ENCODE measurements at regions of chr7 and their contacts with region 1.

Region 1: DNA sequence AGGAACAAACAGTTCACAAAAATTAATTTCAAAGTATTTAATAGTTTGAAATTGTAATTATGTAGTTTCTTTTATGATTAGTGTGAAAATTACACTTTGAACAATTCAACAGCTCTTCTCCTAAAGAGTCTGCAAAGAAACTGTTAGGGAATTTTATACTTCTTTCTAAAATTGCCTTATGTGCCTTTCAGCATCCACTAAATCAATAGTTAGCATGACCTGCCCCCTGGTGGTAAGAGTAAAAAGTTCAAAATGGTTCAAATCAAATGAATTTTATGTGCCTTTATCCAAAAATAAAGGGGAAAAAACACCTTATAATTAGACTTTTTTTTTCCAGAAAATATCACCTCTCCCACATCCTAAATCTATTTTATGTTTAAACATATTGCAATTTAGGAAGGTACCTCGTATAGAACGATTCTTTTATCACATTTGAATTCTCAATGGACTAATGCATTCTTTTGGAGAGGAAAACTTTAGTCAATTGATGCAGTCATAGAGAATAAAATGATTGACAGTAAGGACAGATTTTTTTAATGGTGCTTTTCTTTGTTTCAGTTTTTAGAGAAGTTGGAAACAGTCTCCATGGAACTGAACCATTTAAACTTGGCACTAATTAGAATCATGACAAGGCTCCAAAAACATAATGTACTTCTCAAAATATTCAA is 163.7 kb downstream of the SEMA3D start:
- DNase-seq: no peak
- ATAC-seq: no peak
- H3K4me3 ChIP-seq: no peak overlapping the region
- H3K27ac ChIP-seq: no peak overlapping the region; the same call in 1 of the 2 replicates
- H3K4me1 ChIP-seq: no peaks in the 10 kb centered on the region; the same call in 1 of the 2 replicates
- H3K27me3 ChIP-seq: no peaks in the 10 kb centered on the region
- CTCF ChIP-seq: peak; percentile 61; the same call in 1 of the 2 replicates

Region 2: GRCh38 chr7:83936056-83936708 is 1087.0 kb before region 1 on chr7:
- CTCF ChIA-PET with region 1: no interaction called
- POLR2A ChIA-PET with region 1: no interaction called
- in situ Hi-C with region 1: no loop called
- intact Hi-C with region 1: loop called (anchors 1 kb)
- DNase-seq: peak; percentile 62
- ATAC-seq: peak; percentile 94
- H3K4me3 ChIP-seq: no peak overlapping the region
- H3K27ac ChIP-seq: peak overlapping the region; percentile 21; the same call in 1 of the 2 replicates
- H3K4me1 ChIP-seq: no peaks in the 10 kb centered on the region; the same call in 1 of the 2 replicates
- H3K27me3 ChIP-seq: no peaks in the 10 kb centered on the region
- CTCF ChIP-seq: peak; percentile 84

Region 3: DNA sequence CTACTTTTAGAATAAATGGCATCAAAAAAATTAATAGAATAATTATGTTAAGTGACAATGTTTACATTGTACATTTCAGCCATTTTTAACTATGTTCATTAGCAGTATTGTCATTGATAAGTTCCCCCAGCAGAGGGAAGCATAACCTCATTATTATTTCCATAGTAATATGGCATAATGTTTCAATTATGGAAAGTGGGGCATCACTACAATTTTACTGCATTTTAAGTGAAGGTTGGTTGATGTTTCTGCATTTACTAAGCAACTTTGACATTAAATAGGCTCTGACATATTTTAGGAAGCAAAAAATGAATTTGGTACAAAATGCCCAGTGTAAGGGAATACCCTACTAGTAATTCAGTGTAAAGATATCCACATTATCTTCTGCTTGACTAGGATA is 1046.9 kb before region 1 on chr7:
- CTCF ChIA-PET with region 1: interaction called, 3 read pairs
- POLR2A ChIA-PET with region 1: no interaction called
- in situ Hi-C with region 1: no loop called
- intact Hi-C with region 1: loop called (anchors 2 kb)
- DNase-seq: peak; percentile 28
- ATAC-seq: peak; percentile 77; the same call in 1 of the 2 replicates
- H3K4me3 ChIP-seq: no peak overlapping the region
- H3K27ac ChIP-seq: no peak overlapping the region; the same call in 1 of the 2 replicates
- H3K4me1 ChIP-seq: no peaks in the 10 kb centered on the region; the same call in 1 of the 2 replicates
- H3K27me3 ChIP-seq: no peaks in the 10 kb centered on the region
- CTCF ChIP-seq: peak; percentile 55; the same call in 1 of the 2 replicates

Region 4: GRCh38 chr7:84194543-84195271 is 828.5 kb before region 1 on chr7 and contains the start of gene SEMA3A:
- CTCF ChIA-PET with region 1: interaction called, 4 read pairs
- POLR2A ChIA-PET with region 1: no interaction called
- in situ Hi-C with region 1: no loop called
- intact Hi-C with region 1: loop called (anchors 2 kb)
- DNase-seq: no peak
- ATAC-seq: peak; percentile 80
- H3K4me3 ChIP-seq: peak within 1 kb of the TSS; percentile 64 to 77
- H3K27ac ChIP-seq: peak within 1 kb of the TSS; percentile 78
- H3K4me1 ChIP-seq: peaks cover 23% of the 10 kb centered on the region
- H3K27me3 ChIP-seq: no peaks in the 10 kb centered on the region
- CTCF ChIP-seq: no peak
- total RNA-seq, gene SEMA3A: 43.3 TPM

Region 5: DNA sequence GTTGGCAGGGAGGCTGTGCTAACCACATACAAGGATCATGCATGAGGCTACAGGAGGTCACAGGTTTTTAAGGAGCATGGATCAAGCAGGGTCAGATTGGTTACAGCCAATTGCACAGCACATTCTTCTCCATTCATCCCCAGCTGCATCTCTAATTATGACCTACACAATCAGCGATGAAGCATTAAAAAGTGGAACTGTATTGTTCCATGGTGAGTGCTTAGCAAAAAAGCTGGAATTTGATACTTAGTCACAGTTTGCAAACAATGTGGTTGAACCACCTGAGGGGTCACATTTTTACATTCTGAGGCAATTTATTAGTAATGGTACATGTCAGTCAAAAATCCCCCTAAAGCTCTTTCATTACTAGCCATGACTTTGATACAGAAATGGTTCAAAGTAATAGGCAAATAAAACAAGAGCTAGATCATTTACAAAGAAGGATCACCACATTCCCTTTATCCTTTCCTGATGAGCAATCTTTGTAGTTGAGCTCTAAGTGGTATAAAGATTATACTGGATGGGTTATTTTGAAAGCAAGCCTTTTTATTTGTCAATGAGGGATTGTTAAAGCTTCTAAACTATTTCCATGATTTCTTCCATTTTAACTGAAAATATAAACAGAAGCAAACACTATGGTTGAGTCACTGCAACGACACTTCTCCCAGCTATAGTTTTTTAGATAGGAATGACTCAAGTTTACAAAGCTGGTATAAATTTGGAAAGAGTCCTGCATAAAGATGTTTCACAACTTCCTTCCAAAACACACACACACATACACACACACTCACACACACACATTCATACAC is 610.8 kb before region 1 on chr7:
- CTCF ChIA-PET with region 1: no interaction called
- POLR2A ChIA-PET with region 1: no interaction called
- in situ Hi-C with region 1: no loop called
- intact Hi-C with region 1: loop called (anchors 10 kb)
- DNase-seq: peak; percentile 99
- ATAC-seq: peak; percentile 94
- H3K4me3 ChIP-seq: no peak overlapping the region
- H3K27ac ChIP-seq: peak overlapping the region; percentile 75
- H3K4me1 ChIP-seq: 0 out of 2 replicates have a peak, but pooled peaks cover 5% of the 10 kb centered on the region
- H3K27me3 ChIP-seq: no peaks in the 10 kb centered on the region
- CTCF ChIP-seq: no peak

Measured in Panc1 (cell line).